ENCODE measurements at regions of chr12 and their contacts with region 1.

Region 1: GRCh38 chr12:110012137-110012536 is 12.9 kb downstream of the ANKRD13A start:
- DNase-seq: no peak
- ATAC-seq: no peak
- H3K4me3 Mint-ChIP-seq: no peak overlapping the region
- H3K27ac Mint-ChIP-seq: peak overlapping the region; percentile 13
- H3K4me1 Mint-ChIP-seq: peaks cover 44% of the 10 kb centered on the region
- H3K27me3 Mint-ChIP-seq: no peaks in the 10 kb centered on the region

Region 2: DNA sequence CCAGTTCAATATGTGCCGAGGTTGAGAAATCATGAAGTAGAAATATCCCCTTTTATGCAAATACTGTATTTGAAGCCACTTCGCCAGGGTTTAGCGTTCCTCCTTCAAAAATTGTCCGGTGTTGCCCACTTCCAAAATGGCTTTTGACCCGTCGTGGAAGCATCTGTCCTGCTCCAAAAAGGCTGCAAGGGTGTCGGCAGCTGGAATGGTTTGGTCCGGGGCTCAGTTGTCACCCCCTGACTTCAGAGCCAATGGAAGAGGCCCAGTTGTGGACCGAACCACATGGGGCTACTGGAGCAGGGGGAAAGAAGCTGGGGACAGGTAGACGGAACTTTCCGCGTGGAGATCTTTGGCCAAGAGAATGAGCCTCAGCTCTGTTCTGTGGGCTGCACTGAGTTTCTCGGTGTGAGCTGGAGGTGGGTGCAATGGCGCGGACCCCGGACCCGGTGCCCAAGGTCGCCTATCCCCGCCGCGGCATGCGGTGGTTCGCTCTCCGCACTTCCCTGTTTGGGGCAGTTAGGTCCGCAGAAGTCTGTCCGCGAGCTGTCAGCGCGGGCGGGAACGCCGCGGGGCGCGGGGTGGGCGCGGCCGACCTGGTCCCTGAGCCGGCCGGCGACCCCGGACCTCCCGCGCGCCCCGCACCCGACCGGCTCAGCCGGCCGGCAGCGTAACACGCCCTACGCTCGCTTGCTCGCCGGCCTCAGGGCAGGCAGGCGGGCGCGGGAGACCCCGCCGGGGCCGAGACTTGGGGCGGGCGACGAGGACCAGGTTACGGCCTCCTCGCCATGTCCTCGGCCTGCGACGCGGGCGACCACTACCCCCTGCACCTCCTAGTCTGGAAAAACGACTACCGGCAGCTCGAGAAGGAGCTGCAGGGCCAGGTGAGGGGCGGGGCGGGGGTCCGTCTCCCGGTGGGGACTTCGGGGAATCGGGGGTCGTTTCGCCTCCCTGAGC is 13.0 kb before region 1 on chr12 and contains the start of gene ANKRD13A:
- POLR2A ChIA-PET with region 1: interaction called, 14 read pairs
- DNase-seq: peak; percentile 86
- ATAC-seq: peak; percentile 53
- H3K4me3 Mint-ChIP-seq: peak within 1 kb of the TSS; percentile 100
- H3K27ac Mint-ChIP-seq: peak within 1 kb of the TSS; percentile 96
- H3K4me1 Mint-ChIP-seq: peaks cover 40% of the 10 kb centered on the region
- H3K27me3 Mint-ChIP-seq: no peaks in the 10 kb centered on the region
- total RNA-seq, gene ANKRD13A: 85.8 to 88.8 TPM